Caco-2 (cell line): ENCODE measurements at regions of chr3 and their contacts with region 1.

Region 1: DNA sequence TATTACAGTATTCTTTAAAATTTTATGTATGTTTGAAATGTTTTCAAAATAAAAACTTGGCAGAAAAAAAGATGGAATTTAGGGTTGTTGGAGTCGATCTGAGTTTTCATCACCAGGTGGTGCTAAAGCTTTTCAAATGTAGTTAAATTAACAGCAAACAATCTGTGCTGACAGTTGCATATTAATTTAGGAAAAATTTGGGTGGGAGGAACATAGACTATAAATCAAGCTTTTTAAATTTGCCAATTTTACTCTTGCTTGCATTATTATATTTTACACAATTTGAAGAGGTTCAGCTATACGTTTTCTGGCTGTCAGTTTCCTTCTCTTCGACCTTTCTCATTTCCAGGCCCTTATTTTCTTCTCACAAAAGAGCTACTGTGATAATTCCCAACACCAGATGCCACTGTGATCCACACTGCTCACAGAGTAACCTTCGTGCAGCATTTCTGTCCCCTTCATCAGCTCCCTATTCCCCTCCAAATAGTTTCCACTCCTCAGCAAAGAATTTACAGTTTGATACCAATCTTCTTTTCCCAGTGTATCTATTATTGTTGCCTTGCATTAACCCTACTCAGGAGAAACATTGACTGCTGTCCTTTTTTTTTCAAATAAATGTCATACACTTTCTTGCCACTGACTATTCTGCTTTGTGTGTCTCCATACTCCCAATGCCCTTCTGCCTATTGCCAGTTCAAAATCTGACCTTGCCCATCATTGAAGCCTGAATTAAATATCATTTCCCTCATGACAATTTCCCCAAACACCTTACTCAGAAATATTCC is 53.4 kb upstream of the EIF5A2 start:
- DNase-seq: peak in 1 of 2 experiments; percentile 33
- H3K4me3 ChIP-seq: no peak overlapping the region
- H3K4me3 Mint-ChIP-seq: no peak overlapping the region
- H3K27ac Mint-ChIP-seq: peak overlapping the region; percentile 40
- H3K4me1 ChIP-seq: peaks cover 7% of the 10 kb centered on the region
- H3K4me1 Mint-ChIP-seq: peaks cover 15% of the 10 kb centered on the region
- H3K27me3 ChIP-seq: no peaks in the 10 kb centered on the region
- H3K27me3 Mint-ChIP-seq: no peaks in the 10 kb centered on the region
- CTCF ChIP-seq: peak; percentile 50 to 82

Region 2: DNA sequence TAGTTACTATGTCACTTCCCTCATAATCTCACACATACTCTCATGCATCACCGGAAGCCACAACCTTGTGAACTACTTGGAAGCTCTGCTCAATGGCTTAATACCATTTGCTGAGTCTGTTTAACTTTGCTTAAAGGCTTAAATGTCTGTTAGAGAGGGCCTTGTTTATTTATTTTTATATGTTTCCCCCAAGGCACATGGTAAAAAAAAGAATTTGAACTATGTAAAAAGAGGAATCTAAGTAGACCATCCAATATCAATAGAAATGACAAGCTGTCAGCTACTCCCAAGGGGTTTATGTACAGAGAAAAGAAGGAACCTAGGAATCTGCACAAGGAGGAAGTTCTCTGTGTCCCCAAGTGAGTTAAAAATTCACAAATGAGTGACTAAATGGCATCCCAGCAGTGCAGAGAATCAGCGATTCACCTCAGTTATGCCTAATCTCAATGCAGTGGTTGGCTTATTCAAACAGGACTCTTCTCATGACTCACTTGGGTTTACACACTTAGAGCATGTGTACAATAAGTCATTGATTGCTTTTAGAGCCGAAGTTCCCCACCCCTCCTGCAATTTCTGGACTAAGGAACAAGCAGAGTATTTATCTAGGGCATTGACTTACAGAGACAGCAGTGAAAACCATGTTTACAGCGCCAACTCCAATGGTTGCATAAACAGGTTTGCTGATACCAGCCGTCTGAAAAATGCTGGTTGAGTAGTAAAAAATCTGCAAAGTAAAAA is 40.3 kb after region 1 on chr3:
- CTCF ChIA-PET with region 1: no interaction called
- POLR2A ChIA-PET with region 1: no interaction called
- intact Hi-C with region 1: loop called (anchors 2 kb)
- DNase-seq: peak; percentile 84 to 87
- H3K4me3 ChIP-seq: peak overlapping the region; percentile 14; the same call in 1 of the 2 replicates
- H3K4me3 Mint-ChIP-seq: peak overlapping the region; percentile 62
- H3K27ac Mint-ChIP-seq: peak overlapping the region; percentile 61
- H3K4me1 ChIP-seq: peaks cover 62% of the 10 kb centered on the region
- H3K4me1 Mint-ChIP-seq: peaks cover 24% of the 10 kb centered on the region
- H3K27me3 ChIP-seq: no peaks in the 10 kb centered on the region
- H3K27me3 Mint-ChIP-seq: no peaks in the 10 kb centered on the region
- CTCF ChIP-seq: no peak

Region 3: GRCh38 chr3:171056528-171056927 is 94.7 kb after region 1 on chr3:
- CTCF ChIA-PET with region 1: no interaction called
- POLR2A ChIA-PET with region 1: no interaction called
- intact Hi-C with region 1: no loop called
- DNase-seq: no peak
- H3K4me3 ChIP-seq: no peak overlapping the region
- H3K4me3 Mint-ChIP-seq: no peak overlapping the region
- H3K27ac Mint-ChIP-seq: no peak overlapping the region
- H3K4me1 ChIP-seq: peaks cover 73% of the 10 kb centered on the region
- H3K4me1 Mint-ChIP-seq: peaks cover 7% of the 10 kb centered on the region
- H3K27me3 ChIP-seq: no peaks in the 10 kb centered on the region
- H3K27me3 Mint-ChIP-seq: no peaks in the 10 kb centered on the region
- CTCF ChIP-seq: no peak

Region 4: DNA sequence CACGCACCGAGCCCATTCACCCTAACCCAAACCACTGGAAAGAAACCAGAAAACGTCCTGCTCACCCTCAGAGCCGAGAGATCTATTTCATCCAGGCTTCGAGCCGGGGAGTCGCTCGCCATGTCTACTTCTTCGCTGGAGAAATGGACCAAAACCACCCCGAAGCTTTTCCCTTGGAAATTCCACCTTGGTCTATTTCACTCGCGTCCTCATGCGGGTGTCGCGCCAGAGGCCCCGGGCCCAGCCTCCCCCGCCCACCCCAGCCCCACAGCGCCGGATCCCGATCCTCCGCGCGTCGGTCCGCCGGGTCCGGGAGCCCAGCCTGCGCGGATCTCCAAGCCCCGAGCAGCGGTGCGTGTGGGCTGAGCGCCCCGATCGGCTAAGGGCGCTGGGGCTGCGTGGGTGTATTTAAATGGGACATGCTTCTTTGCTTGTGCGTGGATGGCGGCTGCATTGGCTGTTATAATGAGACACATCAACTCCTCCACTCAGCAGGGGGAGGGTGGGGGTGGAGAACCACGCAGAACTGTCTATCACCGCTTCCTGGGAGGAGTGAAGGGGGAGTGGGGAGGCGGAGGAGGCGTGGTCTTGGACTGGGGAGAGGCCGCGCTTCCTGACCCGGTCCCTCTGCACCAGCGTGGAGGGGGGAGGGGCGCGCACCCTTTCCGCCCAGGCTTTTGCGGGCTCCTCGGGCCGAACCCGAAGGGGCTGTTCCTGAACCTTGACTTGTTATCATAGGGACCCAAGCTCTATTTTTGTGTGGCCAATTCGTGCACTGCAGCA is 498.3 kb after region 1 on chr3 and contains the start of gene TNIK:
- CTCF ChIA-PET with region 1: no interaction called
- POLR2A ChIA-PET with region 1: no interaction called
- intact Hi-C with region 1: loop called (anchors 2 kb)
- DNase-seq: peak; percentile 92 to 94
- H3K4me3 ChIP-seq: peak within 1 kb of the TSS; percentile 72
- H3K4me3 Mint-ChIP-seq: peak within 1 kb of the TSS; percentile 87
- H3K27ac Mint-ChIP-seq: peak within 1 kb of the TSS; percentile 93
- H3K4me1 ChIP-seq: peaks cover 26% of the 10 kb centered on the region
- H3K4me1 Mint-ChIP-seq: peaks cover 22% of the 10 kb centered on the region
- H3K27me3 ChIP-seq: no peaks in the 10 kb centered on the region
- H3K27me3 Mint-ChIP-seq: no peaks in the 10 kb centered on the region
- CTCF ChIP-seq: peak in 1 of 2 experiments; percentile 10
- total RNA-seq, gene TNIK: 21.4 and 22.4 TPM in 2 replicates

Region 5: DNA sequence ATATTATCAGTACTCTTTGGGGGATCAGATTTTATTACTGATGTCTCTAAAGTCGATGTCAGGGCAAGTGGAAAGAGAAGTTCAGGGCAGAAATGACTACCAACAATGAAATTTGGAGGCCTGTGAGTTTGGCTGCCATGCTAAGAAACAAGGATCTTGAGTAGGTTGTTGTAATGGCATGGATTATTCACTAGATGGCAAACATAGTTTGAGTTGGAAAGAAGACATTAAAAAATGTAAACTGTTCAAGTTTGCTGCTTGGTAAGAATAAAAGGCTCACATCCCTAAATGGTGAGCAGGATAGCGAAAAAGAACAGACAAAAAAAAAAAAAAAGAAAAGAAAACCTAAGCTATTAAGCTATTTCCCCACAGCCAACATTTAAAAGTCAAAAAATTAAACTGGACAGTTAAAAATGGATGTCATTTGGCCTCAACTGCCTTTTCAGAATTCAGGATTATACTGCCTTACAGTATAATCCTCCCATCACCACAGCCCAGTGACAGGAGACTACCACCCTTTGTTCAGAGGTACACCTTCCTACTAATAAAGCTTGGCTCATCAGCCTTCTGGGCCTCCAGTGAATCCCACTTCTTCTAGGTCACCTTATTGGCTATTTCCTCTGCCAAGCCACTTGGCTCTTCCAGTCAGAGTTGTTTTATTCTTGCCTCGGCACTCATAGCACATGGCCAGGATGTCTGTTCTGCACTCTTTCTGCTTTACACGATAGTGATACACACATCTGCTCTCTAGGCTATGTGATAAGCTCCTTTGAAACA is 684.7 kb after region 1 on chr3:
- CTCF ChIA-PET with region 1: no interaction called
- POLR2A ChIA-PET with region 1: no interaction called
- intact Hi-C with region 1: loop called (anchors 10 kb)
- DNase-seq: peak in 1 of 2 experiments; percentile 21
- H3K4me3 ChIP-seq: no peak overlapping the region
- H3K4me3 Mint-ChIP-seq: no peak overlapping the region
- H3K27ac Mint-ChIP-seq: no peak overlapping the region
- H3K4me1 ChIP-seq: no peaks in the 10 kb centered on the region
- H3K4me1 Mint-ChIP-seq: no peaks in the 10 kb centered on the region
- H3K27me3 ChIP-seq: no peaks in the 10 kb centered on the region
- H3K27me3 Mint-ChIP-seq: no peaks in the 10 kb centered on the region
- CTCF ChIP-seq: peak; percentile 55 to 66

Region 6: GRCh38 chr3:171829841-171830517 is 868.2 kb after region 1 on chr3:
- CTCF ChIA-PET with region 1: interaction called, 5 read pairs
- POLR2A ChIA-PET with region 1: no interaction called
- intact Hi-C with region 1: loop called (anchors 5 kb)
- DNase-seq: peak; percentile 80 to 81
- H3K4me3 ChIP-seq: no peak overlapping the region
- H3K4me3 Mint-ChIP-seq: no peak overlapping the region
- H3K27ac Mint-ChIP-seq: no peak overlapping the region
- H3K4me1 ChIP-seq: peaks cover 12% of the 10 kb centered on the region; the same call in 1 of the 2 replicates
- H3K4me1 Mint-ChIP-seq: peaks cover 5% of the 10 kb centered on the region
- H3K27me3 ChIP-seq: no peaks in the 10 kb centered on the region
- H3K27me3 Mint-ChIP-seq: no peaks in the 10 kb centered on the region
- CTCF ChIP-seq: peak; percentile 64 to 87